Activated T-helper 1 cell treated with anti-CD3 and anti-CD28 coated beads, Interleukin-12 subunit alpha, Interleukin-12 subunit beta, Interleukin-2, Interleukin-4 antibody, amounts not matched to agents 30 ng/mL and 10 ng/mL and 1 ng/mL, durations not matched to agents 14 hours and 24 hours and 36 hours (primary cell): ENCODE measurements at regions of chr14 and their contacts with region 1.

Region 1: DNA sequence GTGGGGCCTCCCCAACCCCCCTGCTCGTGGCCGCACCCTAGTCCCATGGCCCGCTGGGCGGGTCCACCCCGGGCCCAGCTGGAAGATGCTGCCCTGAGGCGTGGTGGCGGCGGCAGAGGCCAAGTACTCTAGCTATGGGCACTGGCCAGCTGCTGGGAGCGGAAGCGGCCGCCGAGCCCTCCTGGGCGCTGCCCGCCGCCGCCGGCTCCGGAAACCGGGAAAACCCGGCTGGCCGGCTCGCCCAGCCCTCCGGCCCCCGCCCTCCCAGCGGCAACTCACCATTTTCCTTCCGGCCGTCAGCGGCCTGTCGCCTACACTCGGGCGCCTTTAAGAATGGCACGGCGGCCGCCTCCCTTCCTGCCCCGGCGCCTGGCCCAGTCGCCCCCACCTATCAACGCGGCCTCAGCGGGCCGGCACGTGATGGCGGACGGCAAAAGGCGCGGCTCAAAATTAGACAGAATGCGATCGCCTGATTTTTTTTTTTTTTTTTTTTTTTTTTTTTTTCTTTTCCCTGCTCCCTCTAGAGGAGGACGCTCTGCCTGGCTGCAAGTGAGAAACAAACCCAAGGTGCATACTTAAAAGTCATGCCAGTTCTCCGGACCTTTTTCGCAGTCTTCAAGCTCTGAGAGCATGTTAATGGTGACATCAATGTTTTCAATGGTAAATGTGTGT is at the start of gene GMFB:
- DNase-seq: peak; percentile 79
- H3K4me3 Mint-ChIP-seq: peak within 1 kb of the TSS; percentile 87
- H3K27ac Mint-ChIP-seq: peak within 1 kb of the TSS; percentile 88
- H3K4me1 Mint-ChIP-seq: peaks cover 57% of the 10 kb centered on the region
- H3K27me3 Mint-ChIP-seq: no peaks in the 10 kb centered on the region
- total RNA-seq, gene GMFB: 39.5 and 39.7 TPM in 2 replicates

Region 2: DNA sequence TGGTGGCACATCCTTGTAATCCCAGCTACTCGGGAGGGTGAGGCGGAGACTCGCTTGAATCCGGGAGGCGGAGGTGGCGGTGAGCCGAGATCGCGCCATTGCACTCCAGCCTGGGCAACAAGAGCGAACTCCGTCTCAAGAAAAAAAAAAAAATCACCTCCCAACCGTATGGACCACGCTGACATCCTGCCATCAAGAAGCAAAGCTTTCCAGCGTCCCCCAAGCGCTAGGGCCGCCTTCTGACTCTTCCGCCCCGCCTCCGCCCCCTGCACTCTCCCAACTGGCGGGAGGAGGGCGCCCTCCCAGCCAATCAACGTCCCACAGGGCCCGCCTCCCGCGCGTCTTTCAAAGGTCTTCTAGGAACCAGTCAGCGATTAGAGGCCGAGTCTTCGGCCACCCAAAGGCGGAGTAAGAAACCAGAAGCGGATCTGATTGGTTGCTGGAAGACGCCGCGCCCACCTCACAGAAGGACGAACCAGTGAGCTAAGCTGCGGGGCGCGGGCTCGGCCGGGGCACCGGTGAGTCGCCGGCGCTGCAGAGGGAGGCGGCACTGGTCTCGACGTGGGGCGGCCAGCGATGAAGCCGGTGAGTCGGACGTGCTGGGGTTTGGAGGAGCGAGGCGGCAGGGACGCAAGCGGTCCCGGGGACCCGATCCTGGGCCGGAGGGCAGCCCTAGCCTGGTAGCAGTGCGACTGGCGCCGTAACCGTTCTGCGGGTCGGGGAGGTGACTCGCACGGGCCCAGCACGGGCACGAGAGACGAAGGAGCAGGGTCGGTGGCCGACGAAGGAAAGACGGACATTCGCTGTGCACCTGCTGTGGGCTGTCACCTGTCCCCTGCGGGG is 92.1 kb before region 1 on chr14 and contains the start of gene CDKN3:
- intact Hi-C with region 1: loop called (anchors 1 kb)
- DNase-seq: peak; percentile 98
- H3K4me3 Mint-ChIP-seq: peak within 1 kb of the TSS; percentile 81
- H3K27ac Mint-ChIP-seq: peak within 1 kb of the TSS; percentile 85
- H3K4me1 Mint-ChIP-seq: peaks cover 16% of the 10 kb centered on the region
- H3K27me3 Mint-ChIP-seq: peaks cover 3% of the 10 kb centered on the region
- total RNA-seq, gene CDKN3: 36.5 and 39.2 TPM in 2 replicates

Region 3: DNA sequence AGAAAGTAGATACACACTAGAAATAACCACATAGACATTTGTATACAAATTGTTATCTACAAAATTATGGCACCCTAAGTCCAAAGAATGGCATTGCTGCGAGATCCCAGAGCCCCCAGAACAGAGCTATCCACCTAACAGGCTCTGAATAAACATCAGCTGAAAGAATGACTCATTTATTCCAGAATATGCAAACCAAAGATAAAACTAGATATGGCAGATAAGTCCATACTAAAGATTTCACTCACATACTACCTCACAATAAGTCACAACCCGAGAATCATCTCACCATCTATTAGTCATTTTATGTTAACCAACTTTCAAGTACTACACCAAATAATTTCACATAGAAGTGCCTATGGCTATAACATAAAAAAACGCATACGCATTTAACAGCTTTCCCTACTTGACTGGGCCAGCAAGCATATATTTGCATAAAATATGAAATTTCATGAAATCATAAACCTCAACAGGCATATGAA is 53.2 kb before region 1 on chr14:
- intact Hi-C with region 1: loop called (anchors 1 kb)
- DNase-seq: no peak
- H3K4me3 Mint-ChIP-seq: peak overlapping the region; percentile 74
- H3K27ac Mint-ChIP-seq: peak overlapping the region; percentile 89
- H3K4me1 Mint-ChIP-seq: peaks cover 73% of the 10 kb centered on the region
- H3K27me3 Mint-ChIP-seq: no peaks in the 10 kb centered on the region

Region 4: DNA sequence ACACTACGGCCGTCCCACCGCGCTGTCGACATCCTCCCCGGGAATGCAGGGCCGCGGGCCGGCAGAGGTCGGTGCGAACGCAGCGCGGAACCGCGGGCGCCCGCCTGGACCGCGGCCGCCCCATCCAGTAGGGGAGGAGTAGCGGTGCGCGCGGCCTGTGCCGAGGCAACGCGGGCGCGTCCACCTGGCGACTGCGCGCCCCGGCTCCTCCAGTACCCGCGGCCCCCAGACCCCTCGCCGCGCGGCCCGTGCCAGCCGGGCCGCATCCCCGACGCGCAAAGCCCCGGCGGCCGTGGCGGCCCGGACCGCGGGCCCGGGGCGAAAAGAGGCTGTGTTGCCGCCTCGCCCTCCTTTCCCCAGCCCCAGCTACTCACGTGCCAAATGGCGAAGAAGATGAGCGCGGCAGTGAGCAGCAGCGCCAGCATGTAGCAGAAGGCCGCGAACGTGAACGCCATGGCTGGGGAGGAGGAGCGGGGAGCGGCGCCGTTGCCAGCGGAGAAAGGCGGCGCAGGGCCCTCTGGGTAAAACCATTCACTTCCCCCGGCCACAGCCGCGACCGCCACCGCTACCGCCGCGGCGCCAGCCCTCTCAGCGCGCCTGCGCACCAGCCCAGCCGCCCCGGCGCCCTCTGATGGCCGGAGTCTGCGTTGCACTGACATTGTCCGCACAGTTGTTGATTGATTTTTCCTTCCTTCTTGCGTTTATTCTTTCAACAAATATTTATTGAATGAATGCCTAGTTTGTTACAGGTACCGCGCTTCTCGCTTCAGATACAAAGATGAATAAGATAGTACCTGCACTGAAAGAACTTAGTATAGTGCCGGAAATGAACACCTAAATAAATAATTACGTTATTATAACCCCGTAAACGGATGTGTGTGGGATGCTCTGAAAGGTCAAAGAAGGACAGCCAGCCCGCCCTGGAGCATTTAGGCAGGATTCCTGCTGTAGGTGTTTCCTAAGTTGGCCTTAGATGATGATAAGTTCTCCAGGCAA is 47.6 kb before region 1 on chr14 and contains the start of gene CNIH1:
- intact Hi-C with region 1: loop called (anchors 1 kb)
- DNase-seq: peak; percentile 91
- H3K4me3 Mint-ChIP-seq: peak within 1 kb of the TSS; percentile 89
- H3K27ac Mint-ChIP-seq: peak within 1 kb of the TSS; percentile 93
- H3K4me1 Mint-ChIP-seq: peaks cover 45% of the 10 kb centered on the region
- H3K27me3 Mint-ChIP-seq: peaks cover 2% of the 10 kb centered on the region
- total RNA-seq, gene CNIH1: 105 and 109 TPM in 2 replicates

Region 5: DNA sequence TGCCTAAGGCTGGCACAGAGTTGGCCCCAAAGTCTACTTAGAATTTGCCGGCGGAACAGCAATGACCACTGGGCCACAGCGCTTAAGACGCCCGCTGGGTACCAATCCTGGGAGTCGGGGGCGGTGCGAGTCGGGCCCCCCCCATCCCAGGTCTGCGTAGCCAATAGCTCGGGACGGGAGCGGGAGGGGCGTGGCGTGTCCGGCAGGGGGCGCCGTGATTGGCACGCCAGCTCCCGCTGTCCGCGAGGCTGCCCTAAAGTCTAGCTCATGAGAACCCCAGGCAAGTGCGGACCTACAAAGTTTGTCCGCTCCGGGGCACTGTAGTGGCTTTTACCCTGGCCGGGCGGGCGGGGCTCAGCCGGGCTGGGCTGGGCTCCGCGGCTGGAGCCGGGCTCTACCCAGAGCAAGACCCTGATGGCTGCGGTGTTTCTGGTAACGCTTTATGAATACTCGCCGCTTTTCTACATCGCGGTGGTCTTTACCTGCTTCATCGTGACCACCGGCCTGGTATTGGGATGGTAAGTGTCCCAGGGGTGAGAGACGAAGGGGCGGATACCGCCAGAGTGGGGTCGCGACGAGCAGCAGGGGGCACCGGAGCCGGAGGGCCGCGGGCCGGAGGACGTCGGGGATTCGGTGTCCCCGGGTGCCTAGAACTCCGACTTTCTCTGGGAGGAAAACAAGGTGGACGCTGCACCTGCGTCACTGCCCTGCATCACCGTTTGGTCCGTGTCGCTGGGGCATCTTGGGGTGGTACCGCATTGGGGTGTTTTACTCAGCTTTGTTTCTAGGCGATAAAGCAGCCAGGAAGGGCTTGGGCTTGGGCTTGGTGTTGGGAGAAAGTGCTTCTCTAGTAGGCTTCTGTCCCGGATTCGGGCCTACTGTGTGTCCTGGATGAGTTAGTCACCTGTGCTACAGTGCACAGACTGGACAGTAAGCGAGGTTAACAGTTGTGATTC is 21.0 kb after region 1 on chr14 and contains the start of gene CGRRF1:
- intact Hi-C with region 1: loop called (anchors 1 kb)
- DNase-seq: peak; percentile 94
- H3K4me3 Mint-ChIP-seq: peak within 1 kb of the TSS; percentile 95
- H3K27ac Mint-ChIP-seq: peak within 1 kb of the TSS; percentile 83
- H3K4me1 Mint-ChIP-seq: peaks cover 40% of the 10 kb centered on the region
- H3K27me3 Mint-ChIP-seq: peaks cover 8% of the 10 kb centered on the region
- total RNA-seq, gene CGRRF1: 8.5 and 13.2 TPM in 2 replicates

Region 6: DNA sequence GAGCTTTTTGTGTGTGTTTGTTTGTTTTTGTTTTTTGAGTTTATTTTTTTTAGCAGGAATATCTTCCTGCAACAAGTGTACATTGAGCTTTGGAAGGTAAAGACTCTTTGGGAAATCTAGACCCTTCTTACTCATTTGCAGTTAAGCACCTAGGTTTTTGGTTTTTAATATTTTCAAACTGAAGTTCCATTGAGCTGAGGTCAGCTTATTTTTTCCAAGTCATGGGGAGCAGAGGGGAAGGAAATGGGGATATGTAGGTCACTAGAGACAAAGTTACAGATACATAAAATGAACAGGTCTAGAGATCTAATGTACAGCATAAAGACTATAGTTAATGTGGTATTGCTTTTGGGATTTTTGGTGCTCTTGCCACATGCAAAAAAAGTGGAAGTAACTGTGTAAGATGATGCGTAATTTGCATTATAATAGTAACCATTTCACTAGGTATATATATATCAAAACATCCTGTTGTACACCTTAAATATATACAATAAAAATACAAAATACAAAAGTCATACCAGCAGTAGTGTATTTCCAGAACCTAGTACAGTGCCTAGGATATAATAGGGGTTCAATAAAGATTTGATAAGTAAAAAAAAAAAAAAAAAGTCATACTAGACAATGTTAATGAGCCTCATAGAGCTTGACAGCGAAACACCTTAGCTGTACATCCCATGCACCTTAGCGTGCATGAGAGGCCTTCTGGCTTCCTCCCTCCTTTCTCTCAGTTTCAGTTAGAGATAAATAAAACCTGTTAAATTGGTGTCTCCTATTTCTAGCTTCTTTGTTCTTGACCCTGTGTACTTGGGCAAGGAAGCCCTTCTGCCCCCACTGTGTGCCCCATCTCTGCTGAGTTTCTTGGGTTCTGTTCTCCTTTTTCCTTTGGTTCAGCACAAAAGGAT is 43.6 kb after region 1 on chr14:
- intact Hi-C with region 1: no loop called
- DNase-seq: no peak
- H3K4me3 Mint-ChIP-seq: no peak overlapping the region
- H3K27ac Mint-ChIP-seq: no peak overlapping the region
- H3K4me1 Mint-ChIP-seq: no peaks in the 10 kb centered on the region
- H3K27me3 Mint-ChIP-seq: no peaks in the 10 kb centered on the region